Aorta (tissue), 5 donors: ENCODE measurements at regions of chr18 and their contacts with region 1.

Region 1: GRCh38 chr18:62714671-62715435 is 488 bp upstream of the PHLPP1 start:
- DNase-seq: peak; percentile 100
- ATAC-seq: peak; percentile 99
- H3K4me3 ChIP-seq: peak overlapping the region; percentile 75 to 94
- H3K27ac ChIP-seq: peak overlapping the region; percentile 70 to 71
- H3K4me1 ChIP-seq: no peaks in the 10 kb centered on the region
- H3K27me3 ChIP-seq: no peaks in the 10 kb centered on the region

Region 2: DNA sequence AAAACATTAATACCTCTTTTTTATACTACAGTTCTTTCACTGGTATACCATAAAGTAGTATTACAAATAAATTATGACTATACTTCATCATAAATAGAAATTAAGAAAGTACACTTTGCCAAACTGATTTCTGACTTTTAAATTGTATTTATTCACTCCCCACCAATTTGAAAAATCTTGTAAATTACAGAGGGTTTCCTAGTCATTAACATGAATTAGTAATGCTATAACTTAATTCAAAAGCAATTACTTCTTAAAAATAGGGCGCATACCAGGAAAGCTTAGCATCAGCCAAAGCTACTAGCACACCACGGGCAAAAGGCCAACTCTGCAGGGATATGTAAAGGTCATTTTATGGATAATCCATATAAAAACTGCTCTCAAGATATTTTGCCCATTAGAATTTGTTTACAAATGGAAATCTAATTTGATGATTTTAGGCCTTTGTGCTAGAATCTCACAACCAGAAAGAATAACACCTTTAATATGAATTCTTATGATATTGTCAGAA is 670.3 kb before region 1 on chr18:
- intact Hi-C with region 1: no loop called
- DNase-seq: no peak
- ATAC-seq: no peak
- H3K4me3 ChIP-seq: no peak overlapping the region
- H3K27ac ChIP-seq: no peak overlapping the region
- H3K4me1 ChIP-seq: no peaks in the 10 kb centered on the region
- H3K27me3 ChIP-seq: no peaks in the 10 kb centered on the region

Region 3: GRCh38 chr18:62186774-62187542 is 527.9 kb before region 1 on chr18 and contains the starts of genes PIGN and RELCH:
- intact Hi-C with region 1: loop called in 1 of 2 experiments (anchors 5 kb)
- DNase-seq: peak; percentile 96 to 97
- ATAC-seq: peak; percentile 99
- H3K4me3 ChIP-seq: peak within 1 kb of the TSS; percentile 62 to 85
- H3K27ac ChIP-seq: peak within 1 kb of the TSS in 1 of 2 donors; percentile 72
- H3K4me1 ChIP-seq: no peaks in the 10 kb centered on the region
- H3K27me3 ChIP-seq: no peaks in the 10 kb centered on the region
- total RNA-seq, gene PIGN: 25.0 to 32.2 TPM
- total RNA-seq, gene RELCH: 31.6 to 40.7 TPM

Region 4: DNA sequence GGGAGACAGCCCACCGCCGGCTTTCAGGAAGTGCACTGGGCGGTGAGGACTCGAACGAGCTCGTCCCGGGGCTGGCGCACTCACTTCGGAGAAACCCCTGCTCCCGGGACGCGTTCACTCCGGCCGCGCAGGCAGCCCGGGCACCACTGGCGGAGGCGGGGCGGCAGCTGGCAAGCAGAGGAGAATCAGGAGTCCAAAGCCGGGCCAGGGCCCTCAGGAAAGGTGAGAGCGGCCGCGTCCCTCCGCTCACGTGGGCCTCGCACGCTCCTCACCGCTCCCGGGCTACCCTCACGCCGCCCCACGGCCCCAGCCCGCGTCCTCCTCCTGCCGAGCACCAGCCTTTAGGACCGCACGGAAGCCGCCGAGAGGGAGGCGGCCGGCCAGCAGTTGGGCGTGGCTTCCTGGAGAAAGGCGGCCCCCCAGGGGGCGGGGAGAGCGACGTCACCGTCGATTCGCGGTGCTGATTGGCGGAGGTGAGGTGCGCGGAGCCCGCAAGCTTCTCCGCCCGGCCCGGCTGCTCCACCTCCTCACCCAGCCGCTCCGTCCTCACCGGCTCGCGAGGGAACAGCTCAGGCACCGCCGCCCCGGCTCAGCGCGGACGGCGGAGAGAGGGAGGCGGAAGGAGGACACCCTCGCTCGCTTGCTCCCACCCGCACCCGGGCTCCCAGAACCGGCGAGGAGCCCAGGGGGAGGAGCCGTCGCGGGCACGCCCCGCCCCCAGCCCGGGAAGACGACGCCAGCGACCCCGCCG is 192.2 kb before region 1 on chr18 and contains the start of gene ZCCHC2:
- intact Hi-C with region 1: loop called in 1 of 2 experiments (anchors 5 kb)
- DNase-seq: peak; percentile 99
- ATAC-seq: peak; percentile 95
- H3K4me3 ChIP-seq: peak within 1 kb of the TSS; percentile 89 to 97
- H3K27ac ChIP-seq: peak within 1 kb of the TSS; percentile 90 to 93
- H3K4me1 ChIP-seq: no peaks in the 10 kb centered on the region
- H3K27me3 ChIP-seq: no peaks in the 10 kb centered on the region
- total RNA-seq, gene ZCCHC2: 33.5 to 34.7 TPM

Region 5: DNA sequence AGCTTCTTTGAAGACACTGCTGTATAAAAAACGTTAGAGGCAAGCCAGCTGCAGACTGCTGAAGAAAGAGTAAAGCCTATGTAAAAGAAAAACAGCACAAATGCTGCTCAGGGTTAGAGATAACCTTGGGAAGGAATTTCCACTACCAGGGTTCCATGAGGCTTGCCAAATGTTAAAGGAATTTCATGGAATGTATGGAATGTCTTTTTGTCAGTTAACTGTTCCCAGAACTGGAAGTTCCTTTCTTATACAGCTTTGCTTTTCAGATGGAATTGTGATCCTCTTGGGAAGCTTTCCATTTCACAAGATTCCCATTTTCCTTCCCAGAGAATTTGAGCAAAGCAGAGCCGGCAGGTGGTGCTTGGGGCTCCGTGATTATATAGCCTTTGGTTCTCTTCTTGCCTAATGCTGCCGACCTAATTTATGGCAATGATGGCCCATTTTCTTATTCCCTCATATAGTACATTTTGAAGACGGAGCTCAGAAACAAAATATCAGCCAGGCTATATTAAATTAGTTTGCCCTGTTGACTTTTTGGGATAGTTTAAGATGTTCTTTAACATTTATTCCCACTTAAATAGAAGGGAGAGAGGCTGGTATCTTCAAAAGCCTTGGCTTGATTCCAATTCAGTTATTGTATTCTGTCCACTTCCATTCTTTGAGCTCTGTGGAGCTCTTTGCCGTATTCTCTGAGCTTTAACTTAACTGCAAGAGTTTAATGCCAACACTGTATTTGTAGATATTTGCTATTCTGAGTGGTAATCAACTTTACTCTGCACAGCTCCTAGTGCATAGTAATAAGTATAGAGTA is 162.8 kb after region 1 on chr18:
- intact Hi-C with region 1: loop called (anchors 5 to 10 kb)
- DNase-seq: no peak
- ATAC-seq: no peak
- H3K4me3 ChIP-seq: no peak overlapping the region
- H3K27ac ChIP-seq: no peak overlapping the region
- H3K4me1 ChIP-seq: peaks cover 3 to 5% of the 10 kb centered on the region in 2 donors
- H3K27me3 ChIP-seq: no peaks in the 10 kb centered on the region

Region 6: DNA sequence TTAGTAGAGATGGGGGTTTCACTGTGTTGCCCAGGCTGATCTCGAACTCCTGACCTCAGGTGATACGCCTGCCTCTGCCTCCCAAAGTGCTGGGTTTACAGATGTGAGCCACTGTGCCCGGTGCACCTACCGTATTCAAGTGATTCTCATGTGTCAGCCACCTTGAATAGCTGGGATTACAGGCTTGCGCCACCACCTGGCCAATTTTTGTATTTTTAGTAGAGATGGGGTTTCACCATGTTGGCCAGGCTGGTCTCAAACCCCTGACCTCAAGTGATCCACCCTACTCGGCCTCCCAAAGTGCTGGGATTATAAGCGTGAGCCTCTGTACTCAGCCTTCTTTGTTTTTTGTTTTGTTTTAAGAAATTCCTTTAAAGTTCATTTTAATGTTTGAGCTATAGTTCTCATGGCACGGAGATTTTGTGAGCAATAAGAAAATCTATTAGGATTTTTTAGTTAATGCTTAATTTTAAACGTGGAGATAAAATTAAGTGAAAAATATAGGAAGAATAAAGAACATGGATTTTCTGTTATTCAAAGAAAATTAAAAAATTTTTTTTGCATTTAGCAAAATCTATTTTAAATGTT is 243.1 kb after region 1 on chr18:
- intact Hi-C with region 1: loop called (anchors 5 to 10 kb)
- DNase-seq: no peak
- ATAC-seq: no peak
- H3K4me3 ChIP-seq: no peak overlapping the region
- H3K27ac ChIP-seq: no peak overlapping the region
- H3K4me1 ChIP-seq: no peaks in the 10 kb centered on the region
- H3K27me3 ChIP-seq: no peaks in the 10 kb centered on the region

Region 7: GRCh38 chr18:63439334-63439733 is 724.5 kb after region 1 on chr18:
- intact Hi-C with region 1: loop called in 1 of 2 experiments (anchors 10 kb)
- DNase-seq: no peak
- ATAC-seq: peak; percentile 89
- H3K4me3 ChIP-seq: no peak overlapping the region
- H3K27ac ChIP-seq: no peak overlapping the region
- H3K4me1 ChIP-seq: no peaks in the 10 kb centered on the region
- H3K27me3 ChIP-seq: no peaks in the 10 kb centered on the region